ENCODE measurements at regions of chr20 and their contacts with region 1.

Region 1: GRCh38 chr20:17749975-17750721 is 50.4 kb downstream of the BANF2 start:
- DNase-seq: peak; percentile 36 to 53
- ATAC-seq: peak; percentile 84 to 85
- H3K4me3 ChIP-seq: no peak overlapping the region
- H3K27ac ChIP-seq: peak overlapping the region; percentile 18 to 52 (median 49)
- H3K4me1 ChIP-seq: peaks cover 0 to 7% of the 10 kb centered on the region in 2 donors
- H3K27me3 ChIP-seq: no peaks in the 10 kb centered on the region
- CTCF ChIP-seq: no peak
- POLR2A ChIP-seq: no peak

Region 2: GRCh38 chr20:17654649-17655285 is 95.4 kb before region 1 on chr20:
- in situ Hi-C with region 1: loop called in 1 of 4 experiments (anchors 25 kb)
- intact Hi-C with region 1: no loop called
- DNase-seq: no peak
- ATAC-seq: no peak
- H3K4me3 ChIP-seq: no peak overlapping the region
- H3K27ac ChIP-seq: no peak overlapping the region
- H3K4me1 ChIP-seq: peaks cover 16 to 20% of the 10 kb centered on the region in 2 donors
- H3K27me3 ChIP-seq: no peaks in the 10 kb centered on the region
- CTCF ChIP-seq: peak in 3 of 5 experiments; percentile 25 to 50 (median 37)
- POLR2A ChIP-seq: no peak

Region 3: DNA sequence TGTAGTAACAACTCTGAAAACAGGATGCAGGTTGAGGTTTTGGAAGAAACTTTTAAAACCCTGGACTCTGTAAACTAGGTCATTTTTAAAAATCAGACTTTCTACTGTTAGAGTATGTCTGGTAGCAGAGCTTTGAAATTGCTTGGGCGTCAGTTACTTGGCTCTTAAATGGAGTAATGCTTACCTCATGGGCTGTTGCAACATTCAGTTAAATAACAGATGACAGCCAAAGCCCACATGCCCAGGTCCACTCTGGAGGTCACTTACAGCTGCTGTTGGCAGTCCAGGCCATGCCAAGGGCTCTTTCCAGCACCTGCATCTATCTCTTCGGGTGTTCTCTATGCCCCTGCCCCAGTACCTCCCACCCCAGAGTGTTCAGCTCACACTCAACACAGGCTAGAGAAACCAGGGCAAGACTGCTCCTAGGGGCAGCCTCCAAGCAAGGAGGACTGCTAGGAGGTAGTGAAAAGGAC is 46.0 kb after region 1 on chr20:
- in situ Hi-C with region 1: no loop called
- intact Hi-C with region 1: no loop called
- DNase-seq: peak; percentile 19 to 59
- ATAC-seq: peak; percentile 86 to 97
- H3K4me3 ChIP-seq: no peak overlapping the region
- H3K27ac ChIP-seq: peak overlapping the region; percentile 19 to 60 (median 42)
- H3K4me1 ChIP-seq: peaks cover 10 to 11% of the 10 kb centered on the region in 2 donors
- H3K27me3 ChIP-seq: no peaks in the 10 kb centered on the region
- CTCF ChIP-seq: no peak
- POLR2A ChIP-seq: no peak